ENCODE measurements at regions of chr2 and their contacts with region 1.

Region 1: DNA sequence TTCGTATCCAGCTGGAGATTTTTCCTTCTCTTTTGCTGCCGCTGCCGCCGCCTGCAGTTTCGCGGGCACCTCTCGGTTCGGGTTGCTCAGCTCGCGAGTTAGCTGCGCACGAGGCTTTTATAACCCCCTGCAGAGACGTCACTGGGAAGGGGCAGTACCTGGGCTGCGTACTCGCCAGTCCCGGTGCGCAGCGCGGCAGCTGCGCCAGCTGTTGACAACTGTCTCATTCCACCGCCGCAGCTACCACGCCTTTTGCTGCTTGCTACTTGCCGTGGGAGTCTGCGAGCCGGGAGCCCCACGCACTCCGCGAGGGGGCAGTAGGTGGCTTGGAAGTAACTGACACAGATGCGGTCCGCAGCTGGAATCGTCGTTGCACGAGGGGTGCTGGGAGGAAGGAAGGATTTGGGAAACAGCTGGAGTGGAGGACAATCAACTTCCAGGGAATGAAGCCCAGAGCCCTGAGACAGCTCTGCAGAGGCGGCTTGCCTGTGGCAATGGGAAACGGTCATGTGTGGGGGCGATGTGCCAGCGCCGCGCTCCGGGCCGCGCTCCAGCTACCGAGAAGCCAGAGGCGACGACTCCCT is at the start of gene TACR1:
- DNase-seq: peak; percentile 13
- H3K4me3 ChIP-seq: peak within 1 kb of the TSS; percentile 38
- H3K27me3 ChIP-seq: peaks cover 21% of the 10 kb centered on the region
- CTCF ChIP-seq: peak; percentile 90
- polyA plus RNA-seq, gene TACR1: 0.04 and 0.07 TPM in 2 replicates

Region 2: GRCh38 chr2:74908748-74909444 is 290.6 kb before region 1 on chr2:
- CTCF ChIA-PET with region 1: no interaction called
- POLR2A ChIA-PET with region 1: no interaction called
- DNase-seq: no peak
- H3K4me3 ChIP-seq: peak overlapping the region; percentile 10
- H3K27me3 ChIP-seq: no peaks in the 10 kb centered on the region
- CTCF ChIP-seq: no peak

Region 3: GRCh38 chr2:74919827-74920226 is 279.7 kb before region 1 on chr2:
- CTCF ChIA-PET with region 1: interaction called, 15 read pairs
- POLR2A ChIA-PET with region 1: no interaction called
- DNase-seq: no peak
- H3K4me3 ChIP-seq: peak overlapping the region; percentile 37
- H3K27me3 ChIP-seq: no peaks in the 10 kb centered on the region
- CTCF ChIP-seq: peak; percentile 81

Region 4: GRCh38 chr2:75186821-75187220 is 12.7 kb before region 1 on chr2:
- CTCF ChIA-PET with region 1: interaction called, 15 read pairs
- POLR2A ChIA-PET with region 1: no interaction called
- DNase-seq: no peak
- H3K4me3 ChIP-seq: no peak overlapping the region
- H3K27me3 ChIP-seq: peaks cover 1% of the 10 kb centered on the region; the same call in 1 of the 2 replicates
- CTCF ChIP-seq: no peak

Region 5: DNA sequence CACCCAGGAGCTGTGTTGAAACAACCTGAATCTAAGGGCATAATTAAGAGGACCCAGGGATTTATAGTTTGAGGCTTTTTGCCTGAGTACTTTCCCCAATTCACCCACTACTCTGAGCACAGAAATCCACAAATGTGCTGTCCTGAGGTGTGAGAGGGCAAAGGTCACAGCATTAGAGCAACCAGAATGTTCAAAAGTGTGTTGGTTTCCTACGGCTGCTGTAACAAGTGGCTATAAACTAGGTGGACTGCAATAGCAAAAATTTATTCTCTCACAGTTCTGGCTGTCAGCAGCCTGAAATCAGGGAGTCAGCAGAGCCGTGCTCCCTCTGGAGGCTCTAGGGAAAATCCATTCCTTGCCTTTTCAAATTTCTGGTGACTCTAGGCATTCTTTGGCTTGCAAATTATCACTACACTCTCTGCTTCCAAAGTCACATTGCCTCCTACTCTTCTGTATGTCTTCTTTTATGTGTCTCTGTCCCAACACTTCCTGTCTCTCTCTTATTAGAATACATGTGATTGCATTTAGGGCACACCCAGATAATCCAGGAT is 91.2 kb after region 1 on chr2:
- CTCF ChIA-PET with region 1: interaction called, 16 read pairs
- POLR2A ChIA-PET with region 1: no interaction called
- DNase-seq: no peak
- H3K4me3 ChIP-seq: no peak overlapping the region
- H3K27me3 ChIP-seq: no peaks in the 10 kb centered on the region
- CTCF ChIP-seq: peak; percentile 63

Region 6: DNA sequence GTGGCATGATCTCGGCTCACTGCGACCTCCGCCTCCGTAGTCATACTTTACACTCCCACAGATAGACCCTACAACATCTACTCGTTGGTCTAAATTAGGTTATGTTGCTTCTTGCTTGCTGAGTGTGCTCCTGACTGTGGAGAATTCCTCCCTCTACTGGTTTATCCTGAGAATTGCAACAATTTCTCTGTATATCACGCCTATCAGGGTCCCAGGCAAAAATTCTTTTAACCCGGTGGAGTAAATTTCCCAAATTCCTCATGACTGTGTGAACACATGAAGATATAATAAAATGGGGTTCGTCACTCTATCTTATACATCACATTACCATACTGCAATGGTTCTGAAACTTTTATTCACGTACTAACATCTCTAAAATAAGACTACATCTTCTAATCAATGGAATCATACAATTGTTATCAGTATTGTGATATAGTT is 204.5 kb after region 1 on chr2:
- CTCF ChIA-PET with region 1: interaction called, 12 read pairs
- POLR2A ChIA-PET with region 1: no interaction called
- DNase-seq: no peak
- H3K4me3 ChIP-seq: no peak overlapping the region
- H3K27me3 ChIP-seq: peaks cover 4% of the 10 kb centered on the region; the same call in 1 of the 2 replicates
- CTCF ChIP-seq: peak; percentile 78

Measured in BJ (cell line).